Activated naive CD8-positive, alpha-beta T cell treated with anti-CD3 and anti-CD28 coated beads, Interleukin-2, amount 10 ng/mL, durations not matched to agents 7 days and 5 days (primary cell): ENCODE measurements at regions of chr9 and their contacts with region 1.

Region 1: DNA sequence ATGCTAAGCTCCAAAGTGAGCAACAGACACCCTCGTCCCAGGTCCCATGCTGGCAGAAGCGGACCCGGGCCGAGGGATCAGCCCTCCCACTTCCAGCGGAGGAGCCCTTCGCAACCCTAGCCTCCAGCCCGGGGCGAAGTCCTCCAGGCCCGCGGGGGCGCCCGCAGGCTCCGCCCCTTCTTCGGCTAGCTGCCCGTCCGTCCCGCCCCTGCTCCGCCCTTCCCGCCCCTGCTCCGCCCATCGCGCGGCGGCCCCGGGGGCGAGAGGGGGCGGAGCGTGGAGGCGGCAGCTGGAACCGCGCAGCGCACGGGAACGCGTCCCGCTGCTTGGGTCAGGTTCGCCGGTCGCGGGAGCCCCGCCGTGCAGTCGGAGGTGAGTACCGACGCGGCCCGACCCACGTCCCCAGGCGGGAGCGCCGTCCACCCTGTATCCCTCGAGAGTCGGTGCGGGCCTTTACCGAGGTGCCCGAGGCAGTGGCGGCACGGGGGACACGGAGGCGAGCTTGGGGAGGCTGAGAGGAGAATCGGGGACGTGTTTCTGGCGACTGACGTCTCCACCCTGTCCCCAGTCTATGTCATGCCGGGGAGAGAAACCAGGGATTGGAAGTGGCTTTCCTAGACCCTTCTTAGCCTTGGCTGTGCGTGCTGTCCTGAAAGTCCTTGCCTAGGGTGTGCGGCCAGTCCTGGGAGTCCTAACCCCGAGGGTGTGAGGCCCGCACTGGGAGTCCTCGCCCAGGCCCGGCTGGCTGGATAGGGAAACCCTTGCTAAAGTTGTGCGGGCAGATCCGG is at the start of gene ACO1:
- DNase-seq: peak; percentile 95
- ATAC-seq: peak; percentile 89
- H3K4me3 Mint-ChIP-seq: peak within 1 kb of the TSS; percentile 87
- H3K27ac Mint-ChIP-seq: peak within 1 kb of the TSS; percentile 40
- H3K4me1 Mint-ChIP-seq: peaks cover 17% of the 10 kb centered on the region
- H3K27me3 Mint-ChIP-seq: peaks cover 28% of the 10 kb centered on the region
- total RNA-seq, gene ACO1: 8.5 to 9.1 TPM

Region 2: DNA sequence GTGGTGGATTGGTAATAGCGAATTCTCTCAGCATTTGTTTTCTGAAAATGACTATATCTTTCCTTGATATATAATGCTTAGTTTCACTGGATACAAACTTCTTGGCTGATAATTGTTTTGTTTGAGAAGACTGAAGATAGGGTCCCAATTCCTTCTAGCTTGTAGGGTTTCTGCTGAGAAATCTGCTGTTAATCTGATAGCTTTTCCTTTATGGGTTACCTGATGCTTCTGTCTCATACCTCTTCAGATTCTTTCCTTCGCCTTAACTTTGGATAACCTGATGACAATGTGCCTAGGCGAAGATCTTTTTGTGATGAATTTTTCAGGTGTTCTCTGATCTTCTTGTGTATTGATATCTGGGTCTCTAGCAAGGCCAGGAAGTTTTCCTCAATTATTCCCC is 94.8 kb before region 1 on chr9:
- POLR2A ChIA-PET with region 1: no interaction called
- DNase-seq: no peak
- ATAC-seq: no peak
- H3K4me3 Mint-ChIP-seq: no peak overlapping the region
- H3K27ac Mint-ChIP-seq: no peak overlapping the region
- H3K4me1 Mint-ChIP-seq: no peaks in the 10 kb centered on the region
- H3K27me3 Mint-ChIP-seq: peaks cover 3% of the 10 kb centered on the region

Region 3: DNA sequence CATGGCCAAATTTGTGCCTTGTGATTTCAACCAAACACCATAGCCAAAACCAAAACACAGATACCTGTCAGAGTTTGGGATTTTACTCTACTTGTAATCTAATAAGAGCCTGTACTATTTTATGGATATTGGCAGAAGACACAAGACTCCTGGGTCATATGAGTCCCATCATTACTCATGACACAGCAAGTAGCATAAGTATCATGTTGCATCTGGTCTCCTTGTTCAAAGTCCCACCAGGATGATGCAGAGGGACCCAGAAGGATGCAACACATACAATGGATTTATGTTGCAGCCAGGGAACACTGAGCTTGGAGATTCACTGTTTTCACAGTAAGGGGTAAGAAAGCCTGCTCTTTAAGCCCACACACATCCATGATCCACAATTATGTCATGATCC is 13.3 kb before region 1 on chr9:
- POLR2A ChIA-PET with region 1: no interaction called
- DNase-seq: no peak
- ATAC-seq: no peak
- H3K4me3 Mint-ChIP-seq: no peak overlapping the region
- H3K27ac Mint-ChIP-seq: no peak overlapping the region
- H3K4me1 Mint-ChIP-seq: no peaks in the 10 kb centered on the region
- H3K27me3 Mint-ChIP-seq: peaks cover 3% of the 10 kb centered on the region

Region 4: GRCh38 chr9:32550562-32551433 is 166.2 kb after region 1 on chr9:
- POLR2A ChIA-PET with region 1: interaction called, 12 read pairs
- DNase-seq: peak; percentile 94
- ATAC-seq: peak; percentile 77
- H3K4me3 Mint-ChIP-seq: peak overlapping the region; percentile 98
- H3K27ac Mint-ChIP-seq: peak overlapping the region; percentile 92
- H3K4me1 Mint-ChIP-seq: peaks cover 28% of the 10 kb centered on the region
- H3K27me3 Mint-ChIP-seq: no peaks in the 10 kb centered on the region

Region 5: GRCh38 chr9:32571969-32572899 is 187.7 kb after region 1 on chr9:
- POLR2A ChIA-PET with region 1: interaction called, 13 read pairs
- DNase-seq: peak; percentile 45
- ATAC-seq: peak; percentile 84
- H3K4me3 Mint-ChIP-seq: peak overlapping the region; percentile 99
- H3K27ac Mint-ChIP-seq: peak overlapping the region; percentile 100
- H3K4me1 Mint-ChIP-seq: peaks cover 18% of the 10 kb centered on the region
- H3K27me3 Mint-ChIP-seq: no peaks in the 10 kb centered on the region

Region 6: GRCh38 chr9:32764140-32764539 is 379.6 kb after region 1 on chr9:
- POLR2A ChIA-PET with region 1: no interaction called
- DNase-seq: no peak
- ATAC-seq: no peak
- H3K4me3 Mint-ChIP-seq: no peak overlapping the region
- H3K27ac Mint-ChIP-seq: no peak overlapping the region
- H3K4me1 Mint-ChIP-seq: no peaks in the 10 kb centered on the region
- H3K27me3 Mint-ChIP-seq: peaks cover 5% of the 10 kb centered on the region